ENCODE measurements at regions of chr11 and their contacts with region 1.

Region 1: GRCh38 chr11:46278387-46279125 is 1.1 kb downstream of the CREB3L1 start:
- DNase-seq: peak in 4 of 5 donors; percentile 56 to 73 (median 61)
- ATAC-seq: peak in 3 of 4 donors; percentile 27 to 50 (median 43)
- H3K4me3 ChIP-seq: peak overlapping the region; percentile 48 to 87 (median 72)
- H3K27ac ChIP-seq: peak overlapping the region; percentile 60 to 89 (median 80)
- H3K4me1 ChIP-seq: peaks cover 7 to 84% (median 58%) of the 10 kb centered on the region in 12 donors
- H3K27me3 ChIP-seq: peaks cover 0 to 24% (median 0%) of the 10 kb centered on the region in 9 donors
- CTCF ChIP-seq: peak; percentile 32 to 75 (median 56)
- POLR2A ChIP-seq: no peak

Region 2: DNA sequence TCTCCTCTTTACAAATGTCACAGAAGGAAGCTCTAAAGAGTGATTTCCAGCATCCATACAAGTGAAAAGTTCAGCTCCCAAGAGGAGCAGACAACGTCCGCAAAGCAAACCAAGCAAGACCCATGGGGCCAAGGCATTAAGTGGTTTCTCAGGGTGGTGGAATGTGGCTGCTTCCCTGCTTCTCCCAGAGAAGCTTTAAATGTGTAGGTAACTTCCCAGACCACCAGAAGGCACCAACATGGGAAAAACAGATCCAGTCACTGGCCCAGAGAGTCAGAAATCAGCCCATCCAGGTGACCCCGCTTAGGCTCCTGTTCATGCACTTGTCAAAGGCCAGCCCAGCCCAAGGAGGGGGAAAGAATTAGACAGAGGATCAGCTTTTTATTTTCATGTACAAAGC is 144.0 kb before region 1 on chr11:
- intact Hi-C with region 1: no loop called
- DNase-seq: no peak
- ATAC-seq: no peak
- H3K4me3 ChIP-seq: no peak overlapping the region
- H3K27ac ChIP-seq: no peak overlapping the region
- H3K4me1 ChIP-seq: peaks cover 0 to 13% (median 0%) of the 10 kb centered on the region in 12 donors
- H3K27me3 ChIP-seq: no peaks in the 10 kb centered on the region
- CTCF ChIP-seq: no peak
- POLR2A ChIP-seq: no peak

Region 3: DNA sequence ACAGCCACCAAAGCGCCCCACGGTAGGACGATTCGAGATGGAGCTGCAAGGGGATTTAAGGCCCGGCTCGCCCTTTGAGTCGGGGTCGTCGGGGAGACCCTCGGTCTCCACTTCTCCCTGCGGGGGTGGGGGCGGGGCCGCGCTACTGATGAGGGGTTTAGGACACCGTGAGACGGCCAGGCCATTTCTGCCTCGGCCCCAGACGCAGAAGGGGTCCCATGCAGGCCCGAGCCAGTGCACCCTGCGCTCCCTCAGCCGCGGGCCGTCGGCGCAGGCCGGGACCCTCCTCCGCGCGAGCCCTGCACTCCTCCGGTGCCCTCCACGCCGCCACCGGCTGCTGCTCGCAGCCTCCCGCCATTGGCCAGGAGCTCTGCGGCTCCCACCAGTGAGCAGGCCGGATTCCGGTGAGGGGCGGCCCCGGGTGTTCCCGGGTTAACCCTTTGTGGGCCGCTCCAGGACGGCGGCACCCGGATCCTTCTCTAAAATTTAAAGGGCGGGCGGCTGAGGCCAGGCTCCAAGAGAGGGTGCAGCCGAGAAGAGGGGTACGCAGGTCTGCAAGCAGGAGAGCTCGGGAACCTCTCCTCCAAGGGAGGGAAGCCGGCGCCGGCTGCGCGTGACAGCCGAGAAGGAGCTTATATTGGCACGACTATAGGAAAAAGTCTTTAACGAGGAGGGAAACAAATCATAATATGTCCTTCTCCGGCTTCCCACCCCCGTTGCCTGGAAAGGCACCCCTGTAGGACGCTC is 16.9 kb after region 1 on chr11:
- intact Hi-C with region 1: loop called in 2 of 10 experiments (anchors 2 kb)
- DNase-seq: peak; percentile 81 to 89 (median 87)
- ATAC-seq: peak; percentile 87 to 94 (median 92)
- H3K4me3 ChIP-seq: peak overlapping the region; percentile 31 to 77 (median 58)
- H3K27ac ChIP-seq: peak overlapping the region in 11 of 12 donors; percentile 5 to 70 (median 56)
- H3K4me1 ChIP-seq: peaks cover 0 to 55% (median 32%) of the 10 kb centered on the region in 12 donors
- H3K27me3 ChIP-seq: peaks cover 0 to 25% (median 0%) of the 10 kb centered on the region in 9 donors
- CTCF ChIP-seq: no peak
- POLR2A ChIP-seq: peak in 1 of 2 donors; percentile 25